ENCODE measurements at regions of chr4 and their contacts with region 1.

Region 1: DNA sequence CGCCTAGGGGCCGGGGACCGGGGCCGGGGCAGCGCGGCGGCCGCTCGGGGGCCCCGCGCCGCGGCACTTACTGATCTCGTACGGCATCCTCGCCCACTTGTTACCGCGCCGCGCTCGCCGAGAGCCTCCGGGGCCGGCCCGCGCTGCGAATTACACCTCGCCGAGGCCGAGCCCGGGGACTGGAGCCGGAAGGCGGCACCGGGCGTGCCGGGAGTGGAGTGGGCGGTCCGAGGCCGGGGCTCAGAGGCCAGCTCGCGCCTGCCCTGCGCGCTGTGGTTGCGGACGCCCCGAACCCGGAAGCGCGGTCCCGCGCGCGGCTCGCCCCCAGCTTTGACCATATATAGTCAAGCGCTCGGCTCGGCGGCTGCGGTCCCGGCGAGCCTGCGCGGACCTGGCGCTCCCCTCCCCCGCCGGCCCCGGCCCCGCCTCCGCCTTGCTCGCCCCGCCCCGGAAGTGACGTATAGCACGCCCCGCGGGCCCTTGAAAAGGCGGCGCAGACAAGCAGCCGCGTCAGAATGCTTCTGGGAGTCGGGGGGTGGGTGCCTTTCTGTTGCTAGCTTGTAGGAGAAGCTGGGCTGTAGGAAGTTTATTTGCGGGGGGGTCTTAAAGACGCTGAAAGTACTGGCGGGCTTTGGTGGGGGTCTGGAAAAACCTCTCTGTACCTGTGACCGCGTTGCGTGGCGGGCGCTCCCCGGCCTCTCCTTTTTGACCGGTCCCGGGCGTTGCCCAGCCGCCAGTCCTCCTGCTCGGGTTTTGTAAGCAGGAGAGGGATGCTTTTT is at the start of gene WDR1:
- DNase-seq: peak; percentile 93
- ATAC-seq: peak; percentile 83
- H3K4me3 Mint-ChIP-seq: peak within 1 kb of the TSS; percentile 96
- H3K27ac Mint-ChIP-seq: peak within 1 kb of the TSS; percentile 99
- H3K4me1 Mint-ChIP-seq: peaks cover 67% of the 10 kb centered on the region
- H3K27me3 Mint-ChIP-seq: no peaks in the 10 kb centered on the region
- total RNA-seq, gene WDR1: 516 to 550 TPM

Region 2: DNA sequence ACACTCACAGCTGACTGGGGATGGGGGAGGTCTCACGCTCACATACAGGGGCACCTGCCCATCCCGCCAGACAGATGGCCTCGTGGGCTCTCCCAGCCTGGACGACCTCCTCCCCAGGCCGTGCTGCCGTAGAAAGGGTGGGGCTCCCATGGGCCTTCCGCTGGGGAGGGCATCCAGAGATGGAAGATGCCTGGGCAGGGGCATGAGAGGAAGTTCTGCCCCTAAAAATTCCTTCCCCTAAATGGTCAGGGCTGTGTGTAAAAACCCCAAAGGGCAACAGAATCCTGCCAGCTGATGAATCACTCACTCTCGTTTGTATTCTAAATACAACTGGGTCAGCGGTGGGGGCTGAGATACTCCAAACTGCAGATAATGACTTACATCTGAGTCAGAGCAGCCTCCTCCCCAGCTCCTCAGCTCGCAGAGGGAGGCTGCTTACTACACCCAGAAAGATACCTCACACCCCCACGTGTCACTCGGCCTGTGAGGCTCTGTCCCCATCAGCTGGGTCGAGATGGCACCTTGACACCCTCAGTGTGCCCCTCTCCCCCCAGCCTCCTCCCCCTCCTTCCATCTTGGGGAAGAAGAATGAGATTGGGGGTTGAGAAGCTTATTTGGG is 10.2 kb before region 1 on chr4:
- CTCF ChIA-PET with region 1: interaction called, 9 read pairs
- POLR2A ChIA-PET with region 1: interaction called, 50 read pairs
- DNase-seq: peak; percentile 66
- ATAC-seq: peak; percentile 60
- H3K4me3 Mint-ChIP-seq: peak overlapping the region; percentile 18
- H3K27ac Mint-ChIP-seq: peak overlapping the region; percentile 83
- H3K4me1 Mint-ChIP-seq: peaks cover 96% of the 10 kb centered on the region
- H3K27me3 Mint-ChIP-seq: no peaks in the 10 kb centered on the region

Region 3: GRCh38 chr4:10135260-10135659 is 18.5 kb after region 1 on chr4:
- CTCF ChIA-PET with region 1: interaction called, 12 read pairs
- POLR2A ChIA-PET with region 1: interaction called, 14 read pairs
- DNase-seq: no peak
- ATAC-seq: no peak
- H3K4me3 Mint-ChIP-seq: no peak overlapping the region
- H3K27ac Mint-ChIP-seq: no peak overlapping the region
- H3K4me1 Mint-ChIP-seq: no peaks in the 10 kb centered on the region
- H3K27me3 Mint-ChIP-seq: no peaks in the 10 kb centered on the region

Region 4: DNA sequence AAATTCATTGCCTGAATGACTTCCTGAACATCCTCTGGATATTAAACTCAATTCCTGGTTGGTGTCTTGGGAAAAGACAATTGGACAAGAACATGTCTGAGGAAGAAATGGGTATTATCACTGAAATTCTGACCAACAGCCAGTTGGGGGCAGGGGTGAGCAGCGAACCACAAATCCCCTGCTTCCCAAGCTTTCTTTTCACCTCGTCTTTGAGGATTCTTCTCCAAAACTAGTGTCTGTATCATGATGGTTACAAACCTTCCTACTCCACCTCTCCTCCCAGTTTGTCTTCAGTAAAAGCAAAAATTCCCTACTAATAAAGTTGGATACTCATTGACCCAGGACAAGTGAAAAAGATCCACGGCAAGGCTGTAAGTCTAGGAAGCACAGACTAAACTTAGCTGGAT is 48.1 kb after region 1 on chr4:
- CTCF ChIA-PET with region 1: interaction called, 52 read pairs
- POLR2A ChIA-PET with region 1: interaction called, 17 read pairs
- DNase-seq: peak; percentile 31
- ATAC-seq: no peak
- H3K4me3 Mint-ChIP-seq: no peak overlapping the region
- H3K27ac Mint-ChIP-seq: no peak overlapping the region
- H3K4me1 Mint-ChIP-seq: peaks cover 47% of the 10 kb centered on the region
- H3K27me3 Mint-ChIP-seq: peaks cover 2% of the 10 kb centered on the region

Region 5: GRCh38 chr4:10461091-10461849 is 344.5 kb after region 1 on chr4:
- CTCF ChIA-PET with region 1: interaction called, 16 read pairs
- POLR2A ChIA-PET with region 1: interaction called, 16 read pairs
- DNase-seq: peak; percentile 79
- ATAC-seq: peak; percentile 86
- H3K4me3 Mint-ChIP-seq: peak overlapping the region; percentile 73
- H3K27ac Mint-ChIP-seq: no peak overlapping the region
- H3K4me1 Mint-ChIP-seq: peaks cover 33% of the 10 kb centered on the region
- H3K27me3 Mint-ChIP-seq: peaks cover 38% of the 10 kb centered on the region